Activated CD4-positive, alpha-beta T cell treated with anti-CD3 and anti-CD28 coated beads, Interleukin-2, amount 10 ng/mL, durations not matched to agents 24 days and 14 days (primary cell): ENCODE measurements at regions of chr6 and their contacts with region 1.

Region 1: GRCh38 chr6:2738373-2738979 is 12.2 kb downstream of the MYLK4 start:
- DNase-seq: peak; percentile 86
- H3K4me3 Mint-ChIP-seq: no peak overlapping the region
- H3K27ac Mint-ChIP-seq: no peak overlapping the region
- H3K4me1 Mint-ChIP-seq: peaks cover 4% of the 10 kb centered on the region
- H3K27me3 Mint-ChIP-seq: peaks cover 22% of the 10 kb centered on the region

Region 2: DNA sequence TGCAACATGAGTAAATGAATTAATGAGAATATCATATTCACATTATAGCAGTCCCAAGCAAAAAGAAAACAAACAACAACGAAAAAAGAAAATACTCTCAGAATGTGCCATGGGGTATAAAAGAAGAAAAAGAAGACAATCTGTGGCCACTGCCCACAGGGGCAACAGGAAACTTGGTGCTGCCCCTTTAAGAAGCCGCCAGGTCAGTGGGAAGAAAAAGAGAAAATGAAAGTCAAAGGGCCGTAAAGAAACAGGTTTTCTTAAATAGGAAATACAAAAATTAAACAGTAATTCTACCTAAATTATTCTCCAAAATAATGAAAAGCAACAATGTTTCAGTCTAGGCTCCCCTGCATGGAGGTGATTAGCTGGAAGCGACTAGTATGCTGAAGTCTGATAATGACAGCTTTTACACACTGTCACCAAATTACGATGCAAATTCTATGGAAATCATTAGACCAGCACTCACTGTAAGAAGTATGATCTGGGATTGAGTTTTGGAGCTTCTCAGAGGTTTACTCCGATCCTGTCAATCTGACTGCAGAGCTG is 516.7 kb before region 1 on chr6:
- intact Hi-C with region 1: no loop called
- DNase-seq: peak; percentile 66
- H3K4me3 Mint-ChIP-seq: peak overlapping the region; percentile 84
- H3K27ac Mint-ChIP-seq: peak overlapping the region; percentile 73
- H3K4me1 Mint-ChIP-seq: peaks cover 23% of the 10 kb centered on the region
- H3K27me3 Mint-ChIP-seq: no peaks in the 10 kb centered on the region

Region 3: DNA sequence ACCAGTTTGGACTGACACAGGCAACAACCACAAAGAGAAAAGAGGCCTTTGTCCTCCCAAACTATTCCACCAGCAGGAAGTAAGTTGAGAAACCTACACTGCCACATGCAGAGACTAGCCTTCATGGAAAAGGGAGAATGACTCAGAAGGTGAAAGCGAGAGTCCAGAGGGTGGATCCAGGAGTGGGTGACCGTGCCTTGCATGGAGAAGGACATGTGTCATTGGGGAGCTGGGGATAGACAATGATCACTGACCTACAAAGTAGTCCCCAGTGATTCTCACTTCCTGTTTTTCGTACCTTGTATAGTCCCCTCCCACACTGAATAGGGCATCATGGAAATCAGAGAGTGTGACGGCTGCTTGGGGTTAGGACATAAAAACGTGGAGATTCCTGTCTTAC is 79.7 kb before region 1 on chr6:
- intact Hi-C with region 1: no loop called
- DNase-seq: no peak
- H3K4me3 Mint-ChIP-seq: no peak overlapping the region
- H3K27ac Mint-ChIP-seq: no peak overlapping the region
- H3K4me1 Mint-ChIP-seq: peaks cover 2% of the 10 kb centered on the region
- H3K27me3 Mint-ChIP-seq: peaks cover 16% of the 10 kb centered on the region

Region 4: DNA sequence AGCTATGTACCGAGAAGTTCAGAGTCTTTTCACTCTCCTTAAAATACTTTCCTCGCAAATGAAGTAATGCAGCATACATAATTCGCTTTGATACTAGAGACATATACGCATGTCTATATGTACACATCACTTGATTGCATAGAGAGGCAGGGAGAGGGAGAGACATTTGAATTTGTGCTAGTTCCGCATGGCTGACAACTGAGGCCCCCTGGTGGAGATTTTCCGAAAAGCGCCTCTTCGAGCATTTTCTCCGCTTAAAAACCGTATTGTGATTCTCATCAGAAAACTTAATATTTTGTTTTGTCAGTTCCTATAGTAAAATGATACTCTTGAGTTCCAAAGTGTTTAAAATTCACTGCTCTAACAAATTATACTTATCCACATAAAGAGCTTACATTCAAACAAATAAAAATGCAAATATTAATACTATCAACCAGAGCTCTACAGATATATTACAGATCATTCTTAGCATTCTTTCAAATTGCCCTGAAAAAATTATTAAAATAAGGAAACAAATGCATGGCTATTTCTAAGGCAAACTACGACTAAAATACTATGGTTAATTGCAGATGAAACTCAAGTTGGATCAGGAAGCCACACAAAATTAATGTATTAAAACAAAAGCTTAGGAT is 11.6 kb after region 1 on chr6:
- intact Hi-C with region 1: loop called (anchors 1 kb)
- DNase-seq: peak; percentile 91
- H3K4me3 Mint-ChIP-seq: no peak overlapping the region
- H3K27ac Mint-ChIP-seq: no peak overlapping the region
- H3K4me1 Mint-ChIP-seq: peaks cover 4% of the 10 kb centered on the region
- H3K27me3 Mint-ChIP-seq: peaks cover 63% of the 10 kb centered on the region